ENCODE measurements at regions of chr6 and their contacts with region 1.

Region 1: GRCh38 chr6:47381036-47381435 is 71.3 kb upstream of the TNFRSF21 start:
- DNase-seq: no peak
- H3K4me3 ChIP-seq: no peak overlapping the region
- H3K27ac ChIP-seq: no peak overlapping the region
- H3K4me1 ChIP-seq: no peaks in the 10 kb centered on the region
- H3K27me3 ChIP-seq: no peaks in the 10 kb centered on the region
- CTCF ChIP-seq: no peak

Region 2: DNA sequence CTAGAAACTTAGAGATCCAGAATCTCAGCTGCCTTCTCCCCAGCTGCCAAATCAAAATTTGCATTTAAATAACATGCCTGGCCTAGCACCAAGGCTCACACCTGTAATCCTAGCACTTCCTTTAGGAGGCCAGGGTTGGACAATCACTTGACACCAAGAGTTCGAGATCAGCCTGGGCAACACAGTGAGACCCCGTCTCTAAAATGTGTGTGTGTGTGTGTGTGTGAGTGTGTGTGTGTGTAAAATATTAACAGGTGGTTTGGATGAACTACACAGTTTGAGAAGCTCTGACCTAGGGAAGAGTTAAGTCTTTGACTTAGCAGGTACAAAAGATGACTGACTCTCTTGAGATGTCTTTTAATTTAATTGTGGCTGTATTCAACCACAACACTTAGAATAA is 76.3 kb after region 1 on chr6:
- CTCF ChIA-PET with region 1: interaction called, 10 read pairs
- POLR2A ChIA-PET with region 1: no interaction called
- intact Hi-C with region 1: no loop called
- DNase-seq: no peak
- H3K4me3 ChIP-seq: no peak overlapping the region
- H3K27ac ChIP-seq: no peak overlapping the region
- H3K4me1 ChIP-seq: 0 out of 2 replicates have a peak, but pooled peaks cover 10% of the 10 kb centered on the region
- H3K27me3 ChIP-seq: no peaks in the 10 kb centered on the region
- CTCF ChIP-seq: no peak

Measured in PC-9 (cell line).